Activated CD4-positive, alpha-beta T cell treated with anti-CD3 and anti-CD28 coated beads, Interleukin-2, amount 10 ng/mL, durations not matched to agents 24 days and 14 days (primary cell): ENCODE measurements at regions of chr1 and their contacts with region 1.

Region 1: DNA sequence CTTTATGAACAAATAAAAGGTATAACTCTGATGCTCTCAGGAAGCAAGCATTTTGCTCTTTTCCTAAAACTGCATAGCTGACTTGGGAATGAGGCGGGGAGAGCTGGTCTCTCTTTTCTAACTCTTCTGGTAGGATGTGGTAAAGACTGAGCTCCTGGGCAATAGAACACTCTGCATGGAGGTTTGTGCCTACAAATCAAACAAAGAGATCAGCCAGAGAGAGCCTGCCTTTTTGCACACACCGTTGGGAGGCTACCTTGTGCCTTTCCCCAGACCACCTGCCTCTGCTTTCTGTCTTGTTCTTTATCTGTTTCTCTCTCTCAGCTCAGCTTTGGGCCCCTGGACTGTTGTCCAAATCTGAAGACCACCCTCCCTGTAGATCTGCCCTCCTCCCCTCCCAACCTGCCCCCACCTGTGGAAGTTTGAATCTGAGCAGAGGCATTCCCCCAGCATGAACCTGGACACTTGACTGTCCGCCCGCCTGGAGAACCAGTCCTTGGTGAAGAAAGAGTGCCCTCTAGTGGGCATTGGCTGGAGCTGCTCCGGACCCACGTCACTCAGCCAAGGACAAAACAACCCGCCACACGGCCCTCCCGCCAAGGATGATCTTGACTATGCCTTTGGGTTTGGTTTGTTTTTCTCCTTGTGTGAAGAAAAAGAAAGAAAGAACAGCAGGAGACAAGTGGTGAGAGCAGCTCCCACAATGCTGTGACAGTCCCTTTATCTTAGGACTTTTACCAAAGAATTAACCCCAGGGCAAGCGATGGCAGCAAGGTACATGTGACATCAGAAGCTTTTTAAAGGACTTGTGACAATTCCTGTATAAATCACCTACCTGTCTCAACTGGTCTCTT is 228.2 kb downstream of the PBX1 start:
- DNase-seq: peak; percentile 87
- H3K4me3 Mint-ChIP-seq: no peak overlapping the region
- H3K27ac Mint-ChIP-seq: no peak overlapping the region
- H3K4me1 Mint-ChIP-seq: peaks cover 4% of the 10 kb centered on the region
- H3K27me3 Mint-ChIP-seq: no peaks in the 10 kb centered on the region

Region 2: DNA sequence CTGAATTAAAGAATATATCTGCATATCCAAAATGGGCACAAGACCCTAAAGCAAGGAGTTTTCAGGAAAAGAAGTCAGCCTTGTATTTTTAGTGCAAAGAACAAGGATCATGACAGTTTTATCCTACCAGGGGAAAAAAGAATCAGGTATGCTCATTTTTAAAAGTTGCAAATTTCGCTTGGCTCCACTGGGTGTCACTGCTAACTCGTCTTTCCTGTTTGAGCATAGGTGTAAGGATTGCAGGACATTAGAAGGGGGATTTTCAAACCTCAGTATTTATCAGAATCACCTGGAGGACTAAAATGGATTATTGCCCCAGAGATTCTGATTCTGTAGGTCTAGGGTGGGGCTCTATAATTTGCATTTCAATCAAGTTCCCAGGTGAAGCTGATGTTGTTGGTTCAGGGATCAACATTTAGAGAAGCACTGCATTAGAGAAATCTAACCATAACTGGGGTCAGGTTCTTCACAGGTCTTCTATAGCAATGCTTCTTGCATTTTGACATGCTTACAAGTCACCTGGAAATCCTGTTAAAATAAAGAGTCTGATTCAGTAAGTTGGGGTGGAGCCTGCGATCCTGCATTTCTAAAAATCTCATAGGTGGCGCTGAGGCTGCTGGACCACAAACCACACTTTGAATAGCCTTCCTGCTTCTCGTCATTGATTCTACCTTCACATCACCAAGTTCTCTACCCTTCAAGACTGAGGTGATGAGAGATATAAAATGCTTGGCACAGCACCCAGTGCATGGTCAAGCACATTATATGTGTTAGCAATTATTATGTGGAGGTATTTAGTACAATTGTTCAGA is 1425.9 kb before region 1 on chr1:
- intact Hi-C with region 1: loop called (anchors 5 kb)
- DNase-seq: peak; percentile 57
- H3K4me3 Mint-ChIP-seq: no peak overlapping the region
- H3K27ac Mint-ChIP-seq: no peak overlapping the region
- H3K4me1 Mint-ChIP-seq: peaks cover 2% of the 10 kb centered on the region
- H3K27me3 Mint-ChIP-seq: peaks cover 18% of the 10 kb centered on the region

Region 3: GRCh38 chr1:163410073-163410999 is 1376.9 kb before region 1 on chr1:
- intact Hi-C with region 1: loop called (anchors 5 kb)
- DNase-seq: peak; percentile 78
- H3K4me3 Mint-ChIP-seq: no peak overlapping the region
- H3K27ac Mint-ChIP-seq: no peak overlapping the region
- H3K4me1 Mint-ChIP-seq: peaks cover 2% of the 10 kb centered on the region
- H3K27me3 Mint-ChIP-seq: peaks cover 2% of the 10 kb centered on the region

Region 4: DNA sequence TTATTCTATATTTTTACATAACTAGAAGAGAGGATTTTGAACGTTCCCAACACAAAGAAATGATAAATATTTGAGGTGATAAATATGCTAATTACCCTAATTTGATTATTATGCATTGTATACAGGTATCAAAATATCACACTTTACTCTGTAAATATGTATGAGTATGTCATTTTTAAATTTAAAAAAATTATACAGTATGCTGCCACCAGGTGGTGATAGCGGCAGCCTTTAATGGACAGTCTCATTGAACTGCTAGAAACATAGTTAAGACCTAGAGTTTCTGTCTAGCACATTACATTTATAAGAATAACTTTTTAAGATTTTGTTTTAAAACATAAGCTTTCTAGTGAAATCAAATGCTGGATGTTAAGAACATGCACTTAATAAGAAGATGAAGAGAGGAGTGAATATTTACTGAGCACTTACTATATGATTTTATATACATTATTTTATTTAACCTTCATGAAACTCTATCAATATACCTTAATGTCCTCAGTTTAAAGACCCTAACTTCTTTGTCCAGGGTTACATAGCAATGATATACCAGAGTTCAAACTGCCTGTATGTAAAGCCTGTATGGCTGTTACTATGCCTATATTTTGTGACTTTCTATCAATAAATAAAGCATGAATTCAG is 1258.4 kb before region 1 on chr1:
- intact Hi-C with region 1: loop called (anchors 10 kb)
- DNase-seq: peak; percentile 60
- H3K4me3 Mint-ChIP-seq: no peak overlapping the region
- H3K27ac Mint-ChIP-seq: no peak overlapping the region
- H3K4me1 Mint-ChIP-seq: no peaks in the 10 kb centered on the region
- H3K27me3 Mint-ChIP-seq: no peaks in the 10 kb centered on the region

Region 5: DNA sequence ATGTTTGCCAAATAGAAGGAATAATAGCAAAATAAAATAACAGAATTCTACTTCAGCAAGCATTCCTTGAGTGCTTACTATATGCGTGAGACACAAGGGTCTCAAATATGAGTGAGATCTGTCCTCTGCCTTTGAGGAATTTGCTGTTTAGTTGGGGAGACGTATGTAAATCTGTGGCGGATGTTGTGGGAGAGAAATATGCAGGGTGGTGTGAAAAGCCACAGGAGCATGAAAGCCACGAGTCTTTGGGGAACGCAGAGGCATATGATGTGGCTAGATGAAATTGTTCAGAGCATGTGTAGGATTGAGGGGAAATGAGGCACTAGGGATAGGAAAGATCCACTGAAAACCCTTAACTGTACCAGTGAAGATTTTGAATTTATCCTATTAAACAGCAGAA is 16.2 kb after region 1 on chr1:
- intact Hi-C with region 1: no loop called
- DNase-seq: no peak
- H3K4me3 Mint-ChIP-seq: no peak overlapping the region
- H3K27ac Mint-ChIP-seq: no peak overlapping the region
- H3K4me1 Mint-ChIP-seq: no peaks in the 10 kb centered on the region
- H3K27me3 Mint-ChIP-seq: no peaks in the 10 kb centered on the region